Psoas muscle (tissue), 8 donors: ENCODE measurements at regions of chr10 and their contacts with region 1.

Region 1: GRCh38 chr10:92880233-92880861 is 32.0 kb downstream of the EXOC6 start:
- DNase-seq: no peak
- ATAC-seq: peak; percentile 69 to 90 (median 76)
- H3K4me3 ChIP-seq: no peak overlapping the region
- H3K27ac ChIP-seq: peak overlapping the region; percentile 12
- H3K4me1 ChIP-seq: peaks cover 24% of the 10 kb centered on the region
- H3K27me3 ChIP-seq: no peaks in the 10 kb centered on the region
- CTCF ChIP-seq: peak; percentile 53

Region 2: GRCh38 chr10:92517034-92517655 is 363.2 kb before region 1 on chr10:
- intact Hi-C with region 1: loop called in 1 of 2 experiments (anchors 10 kb)
- DNase-seq: peak in 1 of 2 donors; percentile 25
- ATAC-seq: peak; percentile 70 to 94 (median 82)
- H3K4me3 ChIP-seq: no peak overlapping the region
- H3K27ac ChIP-seq: no peak overlapping the region
- H3K4me1 ChIP-seq: peaks cover under 1% of the 10 kb centered on the region
- H3K27me3 ChIP-seq: no peaks in the 10 kb centered on the region
- CTCF ChIP-seq: peak; percentile 82

Region 3: GRCh38 chr10:92822060-92822634 is 58.2 kb before region 1 on chr10:
- intact Hi-C with region 1: loop called (anchors 5 to 10 kb)
- DNase-seq: no peak
- ATAC-seq: no peak
- H3K4me3 ChIP-seq: no peak overlapping the region
- H3K27ac ChIP-seq: no peak overlapping the region
- H3K4me1 ChIP-seq: no peaks in the 10 kb centered on the region
- H3K27me3 ChIP-seq: peaks cover 0 to 2% (median 0%) of the 10 kb centered on the region in 3 donors
- CTCF ChIP-seq: no peak

Region 4: DNA sequence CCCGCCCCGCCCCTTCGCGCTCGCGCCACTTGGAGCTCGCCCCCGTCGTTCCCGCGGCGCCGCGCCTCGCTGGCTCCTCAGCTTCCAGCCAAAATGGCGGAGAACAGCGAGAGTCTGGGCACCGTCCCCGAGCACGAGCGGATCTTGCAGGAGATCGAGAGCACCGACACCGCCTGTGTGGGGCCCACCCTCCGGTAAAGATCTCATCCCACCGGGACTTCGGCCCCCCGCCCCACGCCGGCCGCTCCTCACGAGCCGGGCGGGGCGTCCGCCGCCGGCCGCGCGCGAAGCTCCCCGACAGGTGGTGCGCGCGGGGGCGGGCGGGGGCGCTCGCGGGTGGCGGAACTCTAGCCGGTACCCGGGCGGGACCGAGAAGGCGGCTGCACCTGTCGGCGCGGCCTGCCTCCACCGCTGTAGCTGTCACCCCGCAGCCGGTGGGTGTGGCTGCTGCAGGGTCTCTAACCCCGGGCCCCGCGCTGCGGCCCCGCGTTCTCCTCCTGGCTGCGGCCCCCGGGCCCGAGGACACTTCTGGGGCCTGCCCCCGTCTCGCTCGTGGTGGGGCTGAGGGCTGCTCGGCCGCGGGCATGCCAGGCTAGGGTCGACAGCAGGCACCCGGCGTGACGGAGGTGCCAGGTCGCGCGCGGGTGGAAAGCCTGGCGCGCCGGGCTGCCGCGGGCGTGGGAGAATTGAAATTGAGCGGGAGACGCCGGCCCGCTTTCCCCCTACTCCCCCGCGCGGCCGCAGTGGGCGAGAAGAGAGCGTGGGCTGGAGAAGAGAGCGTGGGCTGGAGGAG is 31.7 kb before region 1 on chr10 and contains the start of gene EXOC6:
- intact Hi-C with region 1: loop called (anchors 5 kb)
- DNase-seq: peak; percentile 87 to 91
- ATAC-seq: peak; percentile 90 to 95 (median 93)
- H3K4me3 ChIP-seq: peak within 1 kb of the TSS; percentile 84
- H3K27ac ChIP-seq: peak within 1 kb of the TSS; percentile 96
- H3K4me1 ChIP-seq: peaks cover 14% of the 10 kb centered on the region
- H3K27me3 ChIP-seq: no peaks in the 10 kb centered on the region
- CTCF ChIP-seq: peak; percentile 9
- total RNA-seq, gene EXOC6: 14.4 to 27.8 (median 21.3) TPM